ENCODE measurements at regions of chr18 and their contacts with region 1.

Region 1: GRCh38 chr18:35040988-35041814 is at the start of gene MAPRE2:
- DNase-seq: peak; percentile 99
- H3K4me3 ChIP-seq: peak within 1 kb of the TSS; percentile 88 to 99 (median 89)
- H3K27ac ChIP-seq: peak within 1 kb of the TSS; percentile 80
- H3K4me1 ChIP-seq: peaks cover 61% of the 10 kb centered on the region
- H3K27me3 ChIP-seq: no peaks in the 10 kb centered on the region
- CTCF ChIP-seq: no peak
- POLR2A ChIP-seq: peak; percentile 96
- total RNA-seq, gene MAPRE2: 111 and 117 TPM in 2 replicates

Region 2: GRCh38 chr18:34493566-34494358 is 547.4 kb before region 1 on chr18:
- CTCF ChIA-PET with region 1: no interaction called
- POLR2A ChIA-PET with region 1: no interaction called
- dilution Hi-C with region 1: no loop called
- intact Hi-C with region 1: no loop called
- DNase-seq: peak; percentile 13
- H3K4me3 ChIP-seq: peak overlapping the region; percentile 57 to 85 (median 72)
- H3K27ac ChIP-seq: peak overlapping the region; percentile 68
- H3K4me1 ChIP-seq: no peaks in the 10 kb centered on the region
- H3K27me3 ChIP-seq: no peaks in the 10 kb centered on the region
- CTCF ChIP-seq: no peak
- POLR2A ChIP-seq: no peak

Region 3: DNA sequence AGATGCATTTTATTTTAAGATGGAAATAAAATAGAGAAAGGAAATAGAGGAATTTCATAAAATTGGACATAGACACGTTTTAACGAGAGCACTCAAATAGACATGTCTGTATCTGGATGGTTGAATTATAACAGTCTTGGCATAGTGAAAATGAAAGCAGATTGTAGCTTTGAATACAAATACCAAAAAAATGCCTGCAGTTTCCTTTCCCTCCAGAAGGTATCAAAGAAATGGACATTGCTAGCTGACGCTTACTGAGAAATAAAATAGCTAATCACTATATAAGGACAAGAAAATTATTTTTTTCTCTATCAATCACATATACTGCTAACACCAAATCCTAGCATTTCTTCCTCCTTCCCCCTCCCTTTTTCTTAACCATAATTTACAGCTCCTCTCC is 11.4 kb before region 1 on chr18:
- CTCF ChIA-PET with region 1: interaction called, 62 read pairs
- POLR2A ChIA-PET with region 1: interaction called, 14 read pairs
- dilution Hi-C with region 1: no loop called
- intact Hi-C with region 1: no loop called
- DNase-seq: peak; percentile 34
- H3K4me3 ChIP-seq: no peak overlapping the region
- H3K27ac ChIP-seq: no peak overlapping the region
- H3K4me1 ChIP-seq: peaks cover 13% of the 10 kb centered on the region
- H3K27me3 ChIP-seq: no peaks in the 10 kb centered on the region
- CTCF ChIP-seq: no peak
- POLR2A ChIP-seq: no peak

Region 4: DNA sequence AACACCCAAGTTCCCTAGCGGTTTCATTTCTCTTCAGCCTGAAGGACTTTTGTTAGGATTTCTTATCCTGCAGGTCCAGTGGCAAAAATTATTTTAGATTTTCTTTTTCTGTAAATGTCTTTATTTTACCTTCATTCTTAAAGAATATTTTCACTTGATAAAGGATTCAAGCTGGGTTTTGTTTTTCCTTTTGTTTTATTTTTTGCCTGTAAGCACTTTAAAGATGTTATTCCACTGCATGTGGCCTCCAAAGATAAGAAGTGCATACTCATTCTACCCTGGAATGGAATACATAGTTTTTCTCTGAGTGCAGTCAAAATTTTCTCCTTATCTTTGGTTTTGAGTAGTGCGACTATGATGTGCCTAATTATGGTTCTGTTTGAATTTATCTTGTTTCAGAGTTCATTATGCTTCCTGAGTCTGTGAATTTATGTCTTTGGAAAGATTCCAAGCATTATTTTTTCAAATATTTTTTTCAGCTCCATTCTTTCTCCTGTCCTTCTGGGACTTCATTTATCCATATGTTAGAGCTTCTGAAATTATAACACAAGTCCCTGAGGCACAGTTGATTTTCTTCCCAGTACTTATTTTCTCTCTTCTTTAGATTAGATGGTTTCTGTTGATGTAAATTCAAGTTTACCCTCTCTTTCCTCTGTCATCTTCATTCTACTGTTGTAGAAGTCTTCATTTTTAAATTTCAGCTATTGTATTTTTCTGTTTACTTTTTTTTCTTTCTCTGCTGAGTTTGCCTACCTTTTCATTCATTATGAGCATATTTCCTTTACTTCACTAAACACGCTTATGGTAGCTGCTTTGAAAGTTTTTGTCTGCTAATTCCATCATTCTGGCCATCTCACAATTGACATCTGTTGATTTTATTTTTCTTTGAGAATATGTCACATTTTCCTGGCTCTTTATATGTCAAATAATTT is 69.6 kb after region 1 on chr18:
- CTCF ChIA-PET with region 1: no interaction called
- POLR2A ChIA-PET with region 1: no interaction called
- dilution Hi-C with region 1: no loop called
- intact Hi-C with region 1: loop called (anchors 1 kb)
- DNase-seq: peak; percentile 86
- H3K4me3 ChIP-seq: no peak overlapping the region
- H3K27ac ChIP-seq: no peak overlapping the region
- H3K4me1 ChIP-seq: peaks cover 11% of the 10 kb centered on the region
- H3K27me3 ChIP-seq: no peaks in the 10 kb centered on the region
- CTCF ChIP-seq: no peak
- POLR2A ChIP-seq: no peak

Region 5: DNA sequence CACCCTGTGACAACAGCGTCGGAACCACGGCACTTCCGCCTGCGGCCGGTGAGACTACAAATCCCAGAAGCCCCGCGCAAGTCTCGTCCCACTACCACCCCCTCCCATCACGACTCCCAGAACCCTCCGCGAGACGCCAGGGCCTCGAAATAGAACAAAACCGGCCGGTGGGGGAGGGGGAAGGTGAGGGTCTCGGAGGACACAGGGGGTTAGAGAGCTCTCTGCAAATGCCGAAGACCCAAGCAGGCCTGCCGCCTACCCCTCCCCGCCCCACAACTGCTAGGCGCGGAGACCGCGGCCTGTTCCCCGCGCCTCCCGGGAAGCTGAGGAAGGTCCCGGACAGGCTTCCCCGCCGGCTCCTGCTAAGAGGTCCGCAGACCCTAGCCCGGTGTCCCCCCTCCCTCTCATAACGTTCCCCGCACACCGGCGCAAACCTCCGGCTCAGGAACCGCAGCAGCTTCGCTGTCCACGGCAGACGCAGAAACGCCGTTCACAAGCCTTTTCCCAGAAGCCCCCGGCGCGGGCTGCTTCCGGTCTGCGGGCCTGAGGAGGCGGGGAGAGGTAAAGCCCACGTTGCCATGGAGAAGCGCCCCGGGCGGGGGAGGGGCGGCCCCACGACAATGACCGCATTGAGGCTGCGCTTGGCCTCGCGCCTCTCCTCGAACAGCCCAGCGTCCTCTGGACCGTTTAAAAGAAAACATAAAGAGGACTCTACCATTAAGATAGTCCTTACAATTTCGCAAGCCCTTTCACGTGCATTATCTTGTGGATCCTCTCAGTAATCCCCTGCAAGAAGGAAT is 302.9 kb after region 1 on chr18 and contains the start of gene ZNF24:
- CTCF ChIA-PET with region 1: no interaction called
- POLR2A ChIA-PET with region 1: no interaction called
- dilution Hi-C with region 1: no loop called
- intact Hi-C with region 1: loop called (anchors 1 kb)
- DNase-seq: peak; percentile 92
- H3K4me3 ChIP-seq: peak within 1 kb of the TSS; percentile 69 to 97 (median 92)
- H3K27ac ChIP-seq: peak within 1 kb of the TSS; percentile 95
- H3K4me1 ChIP-seq: peaks cover 18% of the 10 kb centered on the region
- H3K27me3 ChIP-seq: no peaks in the 10 kb centered on the region
- CTCF ChIP-seq: no peak
- POLR2A ChIP-seq: peak; percentile 82
- total RNA-seq, gene ZNF24: 38.6 and 40.2 TPM in 2 replicates

Region 6: DNA sequence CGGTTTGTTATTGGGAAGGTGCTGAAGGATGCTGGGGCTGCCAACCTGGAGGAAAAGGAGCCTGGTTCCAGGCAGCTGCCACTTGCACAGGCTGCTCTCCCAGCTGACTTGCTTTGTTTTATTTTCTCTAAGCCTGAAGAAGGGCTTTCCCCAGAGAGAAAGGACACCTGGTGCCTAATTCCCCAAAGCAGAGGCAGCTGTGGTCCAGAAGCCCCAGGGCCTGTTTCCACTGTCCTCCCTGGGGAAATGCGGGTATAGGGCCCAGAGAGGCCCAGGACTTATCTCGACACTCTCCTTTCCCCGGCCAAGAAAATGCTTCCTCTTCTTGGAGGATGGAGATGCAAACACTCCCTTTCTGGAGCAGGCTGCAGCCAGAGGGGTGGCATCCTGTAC is 426.4 kb after region 1 on chr18:
- CTCF ChIA-PET with region 1: no interaction called
- POLR2A ChIA-PET with region 1: no interaction called
- dilution Hi-C with region 1: no loop called
- intact Hi-C with region 1: loop called (anchors 10 kb)
- DNase-seq: peak; percentile 18
- H3K4me3 ChIP-seq: no peak overlapping the region
- H3K27ac ChIP-seq: peak overlapping the region; percentile 90
- H3K4me1 ChIP-seq: peaks cover 72% of the 10 kb centered on the region
- H3K27me3 ChIP-seq: no peaks in the 10 kb centered on the region
- CTCF ChIP-seq: no peak
- POLR2A ChIP-seq: peak; percentile 4

Region 7: DNA sequence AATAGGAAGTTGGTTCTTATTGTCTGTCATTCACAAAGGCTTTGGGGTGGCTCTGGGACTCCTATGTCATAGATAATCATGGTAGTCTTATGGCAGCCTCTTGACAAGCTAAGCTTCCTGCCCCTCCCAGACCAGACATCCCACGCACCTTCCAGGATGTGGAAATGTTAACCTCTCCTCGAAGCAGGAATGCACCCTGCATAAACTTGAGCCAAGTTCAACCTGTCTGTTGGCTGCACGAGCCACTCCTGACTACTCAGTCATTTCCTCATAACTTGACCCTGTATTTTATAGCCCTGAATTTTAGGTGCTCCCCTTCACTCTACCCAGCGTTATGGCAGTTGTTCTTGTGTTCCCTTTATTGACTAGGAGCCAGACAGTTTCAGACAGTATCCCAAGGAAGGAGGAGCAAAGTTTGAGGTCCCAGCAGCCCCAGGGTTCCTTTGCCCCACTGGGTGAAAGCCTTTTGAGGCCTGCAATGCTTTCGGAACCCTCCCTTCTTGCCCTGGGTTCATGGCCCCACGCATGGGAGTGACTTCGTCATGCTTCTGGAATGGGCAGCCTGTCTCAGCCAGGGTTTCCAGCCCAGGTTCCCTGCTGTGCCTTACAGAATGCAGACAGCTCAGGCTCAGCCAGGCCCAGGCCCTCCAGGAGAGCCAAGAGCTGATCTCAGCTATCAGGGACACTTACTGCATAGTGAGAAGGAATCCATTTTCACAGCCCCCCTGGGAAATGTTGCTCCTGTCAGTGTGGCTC is 472.2 kb after region 1 on chr18:
- CTCF ChIA-PET with region 1: no interaction called
- POLR2A ChIA-PET with region 1: no interaction called
- dilution Hi-C with region 1: no loop called
- intact Hi-C with region 1: no loop called
- DNase-seq: no peak
- H3K4me3 ChIP-seq: no peak overlapping the region
- H3K27ac ChIP-seq: no peak overlapping the region
- H3K4me1 ChIP-seq: no peaks in the 10 kb centered on the region
- H3K27me3 ChIP-seq: no peaks in the 10 kb centered on the region
- CTCF ChIP-seq: no peak
- POLR2A ChIP-seq: no peak

Measured in endothelial cell of umbilical vein (primary cell).